ENCODE measurements at regions of chr1 and their contacts with region 1.

Region 1: DNA sequence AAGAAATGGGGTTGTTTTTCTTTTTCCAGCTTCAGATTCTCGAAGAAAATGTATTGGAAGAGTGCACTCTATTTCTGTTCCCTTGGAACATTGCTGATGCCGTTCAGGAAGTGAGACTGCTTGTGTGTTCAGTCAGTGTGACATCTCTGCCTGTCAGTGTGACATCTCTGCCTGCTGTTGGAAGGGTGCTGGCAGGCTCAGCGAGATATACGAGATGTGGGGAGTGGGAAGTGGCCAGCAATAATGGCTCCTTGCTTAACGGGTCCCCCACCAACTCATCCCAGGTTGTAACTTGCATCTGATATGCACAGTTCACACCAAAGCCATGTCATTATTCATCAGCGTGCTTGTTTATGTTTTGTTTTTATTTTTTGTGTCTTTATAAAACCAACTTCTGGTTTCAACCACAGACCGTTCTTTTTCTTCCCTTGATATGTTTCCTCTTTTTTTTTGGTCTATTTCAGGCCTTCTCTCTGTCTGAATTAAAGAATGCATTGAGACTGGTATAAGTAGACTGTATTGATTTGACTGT is 145.4 kb downstream of the GALNT2 start:
- DNase-seq: peak; percentile 30
- H3K4me3 ChIP-seq: no peak overlapping the region
- H3K27ac ChIP-seq: no peak overlapping the region
- H3K4me1 ChIP-seq: peaks cover 24% of the 10 kb centered on the region
- H3K27me3 ChIP-seq: no peaks in the 10 kb centered on the region
- CTCF ChIP-seq: no peak
- POLR2A ChIP-seq: no peak

Region 2: DNA sequence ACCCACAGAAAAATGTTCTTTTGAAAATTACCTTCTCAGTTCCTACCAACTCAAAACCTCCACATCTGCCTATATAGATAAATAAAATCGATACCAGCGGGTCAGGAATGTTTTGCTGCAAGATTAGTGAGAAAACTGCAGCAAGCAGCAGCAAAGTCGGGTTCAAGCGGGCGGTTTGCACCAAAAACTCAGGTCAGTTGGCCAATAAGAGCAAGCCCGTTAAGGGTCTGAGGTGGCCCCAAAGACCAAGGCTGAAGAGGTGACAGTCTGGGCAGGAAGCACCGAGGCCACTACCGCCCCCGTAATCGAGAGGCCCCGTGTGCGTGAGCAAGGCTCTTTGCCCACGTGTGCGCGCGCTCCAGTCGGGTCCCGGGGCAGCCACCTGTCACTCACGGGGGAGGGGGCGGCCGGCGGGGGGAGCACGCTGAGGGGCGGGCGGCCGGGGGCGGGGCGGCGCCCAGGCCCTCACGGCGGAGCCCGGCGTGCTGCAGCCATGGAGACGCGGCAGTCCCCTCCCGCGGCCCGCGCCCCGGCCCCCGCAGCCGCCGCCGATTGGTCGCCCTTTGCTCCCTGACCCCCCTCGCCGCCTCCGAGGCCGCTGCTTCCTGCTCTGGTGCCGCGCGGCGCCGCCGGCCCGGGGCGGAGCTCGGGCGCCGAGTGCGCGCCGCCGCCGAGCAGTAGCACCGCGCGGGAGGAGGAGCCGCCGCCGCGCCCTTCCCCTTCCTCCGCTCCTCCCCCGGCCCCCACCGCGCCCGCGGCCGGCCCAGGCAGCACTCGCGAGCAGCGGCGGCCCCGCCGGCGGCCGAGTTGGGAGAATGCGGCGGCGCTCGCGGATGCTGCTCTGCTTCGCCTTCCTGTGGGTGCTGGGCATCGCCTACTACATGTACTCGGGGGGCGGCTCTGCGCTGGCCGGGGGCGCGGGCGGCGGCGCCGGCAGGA is 145.7 kb before region 1 on chr1 and contains the start of gene GALNT2:
- intact Hi-C with region 1: loop called (anchors 5 kb)
- DNase-seq: peak; percentile 90
- H3K4me3 ChIP-seq: peak within 1 kb of the TSS; percentile 84 to 86
- H3K27ac ChIP-seq: peak within 1 kb of the TSS; percentile 89 to 91
- H3K4me1 ChIP-seq: peaks cover 22% of the 10 kb centered on the region
- H3K27me3 ChIP-seq: no peaks in the 10 kb centered on the region
- CTCF ChIP-seq: no peak
- POLR2A ChIP-seq: peak; percentile 19
- total RNA-seq, gene GALNT2: 114 to 135 TPM

Region 3: DNA sequence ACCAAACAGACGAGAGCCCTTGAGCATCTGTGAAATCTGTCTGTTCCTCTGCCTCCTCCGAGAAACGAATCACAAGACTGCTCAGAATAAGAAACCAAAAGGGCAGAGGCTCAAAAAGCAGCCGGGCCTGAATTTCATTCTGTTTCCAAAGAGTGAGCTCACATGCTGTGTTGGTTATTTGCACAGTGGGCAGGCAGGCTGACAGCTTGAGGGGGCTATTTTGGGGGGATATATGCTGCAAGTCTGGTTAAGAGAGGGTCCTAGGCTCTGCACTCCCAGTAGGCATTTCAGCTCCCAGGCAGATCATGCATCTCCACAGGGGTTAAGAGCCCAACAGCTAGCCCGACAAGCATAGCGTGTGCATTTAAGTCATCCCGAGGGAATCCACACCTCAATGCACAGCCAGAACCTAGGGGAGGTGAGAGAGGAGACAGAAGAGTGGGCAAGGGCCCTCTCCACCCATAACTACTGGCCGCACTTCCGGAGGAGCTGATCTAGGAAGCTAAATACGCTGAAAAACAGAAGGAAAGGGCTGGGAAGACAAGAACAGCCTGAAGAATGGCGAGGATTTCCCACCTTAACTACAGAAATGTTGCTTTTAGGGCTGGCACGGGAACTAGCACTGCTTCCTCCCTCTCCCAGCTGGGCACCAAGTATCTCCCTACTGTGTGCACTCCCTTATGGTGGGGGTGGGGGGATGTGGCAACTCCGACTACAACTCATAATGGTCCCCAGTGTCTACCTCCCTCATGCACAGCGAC is 209.9 kb after region 1 on chr1:
- intact Hi-C with region 1: no loop called
- DNase-seq: no peak
- H3K4me3 ChIP-seq: no peak overlapping the region
- H3K27ac ChIP-seq: no peak overlapping the region
- H3K4me1 ChIP-seq: peaks cover 25% of the 10 kb centered on the region
- H3K27me3 ChIP-seq: no peaks in the 10 kb centered on the region
- CTCF ChIP-seq: no peak
- POLR2A ChIP-seq: no peak

Measured in testis (tissue), 5 donors.